ENCODE measurements at regions of chr1 and their contacts with region 1.

Region 1: DNA sequence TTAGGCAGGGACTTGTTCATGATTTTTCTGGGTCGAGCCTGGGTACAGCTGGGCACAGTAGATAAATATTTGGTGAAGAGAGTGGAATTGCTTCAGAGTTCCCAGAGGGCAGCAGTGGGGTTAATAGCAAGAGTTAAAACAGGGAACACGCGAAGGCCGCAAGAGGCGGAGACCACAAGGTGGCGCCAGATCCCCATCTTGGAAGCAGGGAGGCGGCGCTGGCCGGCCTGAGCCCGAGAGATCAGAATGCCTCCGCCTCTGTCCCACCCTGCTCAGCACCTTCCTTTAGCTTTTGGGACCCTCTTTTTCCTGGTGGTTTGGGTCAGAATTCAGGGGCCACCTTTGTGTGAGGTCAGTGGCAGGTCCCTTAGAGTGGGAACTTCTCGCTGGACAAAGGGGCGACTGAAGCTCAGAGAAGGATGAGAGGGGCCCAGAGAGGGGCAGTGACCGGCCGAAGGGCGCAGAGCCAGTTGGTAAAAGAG is 6.5 kb upstream of the PADI2 start:
- DNase-seq: peak; percentile 68 to 89 (median 81)
- ATAC-seq: peak; percentile 62
- H3K4me3 ChIP-seq: no peak overlapping the region
- H3K4me3 Mint-ChIP-seq: no peak overlapping the region
- H3K27ac ChIP-seq: no peak overlapping the region
- H3K27ac Mint-ChIP-seq: no peak overlapping the region
- H3K4me1 ChIP-seq: peaks cover 3% of the 10 kb centered on the region
- H3K4me1 Mint-ChIP-seq: no peaks in the 10 kb centered on the region
- H3K27me3 ChIP-seq: no peaks in the 10 kb centered on the region
- H3K27me3 Mint-ChIP-seq: peaks cover 16% of the 10 kb centered on the region
- CTCF ChIP-seq: peak; percentile 93

Region 2: DNA sequence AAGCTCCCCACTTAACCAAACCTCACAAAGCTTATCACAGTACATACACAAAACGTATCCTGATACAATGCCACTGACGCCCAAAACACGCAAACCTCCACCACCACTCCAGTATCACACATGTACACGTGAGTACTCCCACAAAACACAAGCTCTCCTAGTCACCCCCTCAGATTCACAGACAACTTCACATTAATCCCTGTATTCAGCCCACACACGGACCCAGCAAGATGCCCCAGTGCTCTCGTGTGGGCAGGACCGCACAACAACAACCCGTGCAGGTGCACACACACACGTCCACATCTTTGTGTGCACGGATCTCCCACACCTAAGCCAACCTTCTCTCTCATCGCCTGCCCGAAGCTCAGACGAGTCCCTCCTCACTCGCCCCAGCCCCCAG is 96.8 kb after region 1 on chr1:
- CTCF ChIA-PET with region 1: interaction called, 21 read pairs
- POLR2A ChIA-PET with region 1: no interaction called
- intact Hi-C with region 1: no loop called
- DNase-seq: no peak
- ATAC-seq: no peak
- H3K4me3 ChIP-seq: no peak overlapping the region
- H3K4me3 Mint-ChIP-seq: no peak overlapping the region
- H3K27ac ChIP-seq: no peak overlapping the region
- H3K27ac Mint-ChIP-seq: no peak overlapping the region
- H3K4me1 ChIP-seq: no peaks in the 10 kb centered on the region
- H3K4me1 Mint-ChIP-seq: no peaks in the 10 kb centered on the region
- H3K27me3 ChIP-seq: no peaks in the 10 kb centered on the region
- H3K27me3 Mint-ChIP-seq: peaks cover 14% of the 10 kb centered on the region
- CTCF ChIP-seq: no peak

Region 3: DNA sequence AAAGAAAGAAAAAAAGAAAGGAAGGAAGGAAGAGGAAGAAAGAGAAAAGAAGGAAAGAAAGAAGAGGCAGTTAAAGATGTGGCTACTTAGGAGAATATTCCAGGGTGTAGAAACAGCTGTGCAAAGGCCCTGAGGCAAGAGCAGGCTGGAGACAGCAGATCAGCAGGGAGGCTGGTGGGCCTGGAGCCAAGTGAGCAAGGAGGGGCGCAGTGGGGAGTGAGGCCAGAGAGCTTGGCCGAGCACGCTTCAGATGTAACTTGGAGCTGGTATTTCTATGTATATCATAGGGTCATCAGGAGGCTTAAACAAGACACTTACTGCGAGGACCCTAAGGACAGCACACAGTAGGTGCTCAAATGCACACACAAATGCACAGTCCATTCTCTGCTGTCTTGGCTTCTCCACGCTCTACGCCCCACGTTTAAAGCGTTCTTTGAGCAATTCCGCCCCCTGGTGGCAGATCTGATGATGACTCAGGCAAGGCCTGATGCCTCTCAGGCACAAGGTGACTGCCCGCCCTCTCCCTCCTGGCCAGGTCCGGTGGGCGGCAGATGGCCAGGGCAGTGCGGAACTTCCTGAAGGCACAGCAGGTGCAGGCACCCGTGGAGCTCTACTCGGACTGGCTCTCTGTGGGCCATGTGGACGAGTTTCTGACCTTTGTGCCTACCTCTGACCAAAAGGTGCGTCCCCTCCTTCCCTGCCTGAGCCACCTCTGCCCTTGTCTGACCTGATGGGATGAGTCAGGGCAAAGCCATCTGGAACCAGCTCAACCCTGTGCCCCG is 111.2 kb after region 1 on chr1:
- CTCF ChIA-PET with region 1: interaction called, 322 read pairs
- POLR2A ChIA-PET with region 1: no interaction called
- intact Hi-C with region 1: loop called in 1 of 2 experiments (anchors 1 kb)
- DNase-seq: peak; percentile 77 to 93 (median 83)
- ATAC-seq: peak; percentile 74
- H3K4me3 ChIP-seq: no peak overlapping the region
- H3K4me3 Mint-ChIP-seq: no peak overlapping the region
- H3K27ac ChIP-seq: no peak overlapping the region
- H3K27ac Mint-ChIP-seq: no peak overlapping the region
- H3K4me1 ChIP-seq: no peaks in the 10 kb centered on the region
- H3K4me1 Mint-ChIP-seq: peaks cover 4% of the 10 kb centered on the region
- H3K27me3 ChIP-seq: no peaks in the 10 kb centered on the region
- H3K27me3 Mint-ChIP-seq: peaks cover 9% of the 10 kb centered on the region
- CTCF ChIP-seq: peak; percentile 80

Region 4: GRCh38 chr1:17335821-17336710 is 210.3 kb after region 1 on chr1:
- CTCF ChIA-PET with region 1: interaction called, 4 read pairs
- POLR2A ChIA-PET with region 1: no interaction called
- intact Hi-C with region 1: loop called in 1 of 2 experiments (anchors 2 kb)
- DNase-seq: peak; percentile 17 to 73 (median 53)
- ATAC-seq: no peak
- H3K4me3 ChIP-seq: no peak overlapping the region
- H3K4me3 Mint-ChIP-seq: no peak overlapping the region
- H3K27ac ChIP-seq: no peak overlapping the region
- H3K27ac Mint-ChIP-seq: no peak overlapping the region
- H3K4me1 ChIP-seq: no peaks in the 10 kb centered on the region
- H3K4me1 Mint-ChIP-seq: no peaks in the 10 kb centered on the region
- H3K27me3 ChIP-seq: peaks cover 0 to 2% of the 10 kb centered on the region in 2 experiments
- H3K27me3 Mint-ChIP-seq: peaks cover 25% of the 10 kb centered on the region
- CTCF ChIP-seq: peak; percentile 79

Region 5: GRCh38 chr1:17405898-17406759 is 280.3 kb after region 1 on chr1:
- CTCF ChIA-PET with region 1: interaction called, 3 read pairs
- POLR2A ChIA-PET with region 1: no interaction called
- intact Hi-C with region 1: loop called (anchors 5 to 10 kb)
- DNase-seq: peak in 8 of 9 experiments; percentile 15 to 65 (median 46)
- ATAC-seq: peak; percentile 57
- H3K4me3 ChIP-seq: no peak overlapping the region
- H3K4me3 Mint-ChIP-seq: no peak overlapping the region
- H3K27ac ChIP-seq: no peak overlapping the region
- H3K27ac Mint-ChIP-seq: no peak overlapping the region
- H3K4me1 ChIP-seq: no peaks in the 10 kb centered on the region
- H3K4me1 Mint-ChIP-seq: no peaks in the 10 kb centered on the region
- H3K27me3 ChIP-seq: no peaks in the 10 kb centered on the region
- H3K27me3 Mint-ChIP-seq: no peaks in the 10 kb centered on the region
- CTCF ChIP-seq: peak; percentile 62